Natural killer cell (primary cell): ENCODE measurements at regions of chr4 and their contacts with region 1.

Region 1: DNA sequence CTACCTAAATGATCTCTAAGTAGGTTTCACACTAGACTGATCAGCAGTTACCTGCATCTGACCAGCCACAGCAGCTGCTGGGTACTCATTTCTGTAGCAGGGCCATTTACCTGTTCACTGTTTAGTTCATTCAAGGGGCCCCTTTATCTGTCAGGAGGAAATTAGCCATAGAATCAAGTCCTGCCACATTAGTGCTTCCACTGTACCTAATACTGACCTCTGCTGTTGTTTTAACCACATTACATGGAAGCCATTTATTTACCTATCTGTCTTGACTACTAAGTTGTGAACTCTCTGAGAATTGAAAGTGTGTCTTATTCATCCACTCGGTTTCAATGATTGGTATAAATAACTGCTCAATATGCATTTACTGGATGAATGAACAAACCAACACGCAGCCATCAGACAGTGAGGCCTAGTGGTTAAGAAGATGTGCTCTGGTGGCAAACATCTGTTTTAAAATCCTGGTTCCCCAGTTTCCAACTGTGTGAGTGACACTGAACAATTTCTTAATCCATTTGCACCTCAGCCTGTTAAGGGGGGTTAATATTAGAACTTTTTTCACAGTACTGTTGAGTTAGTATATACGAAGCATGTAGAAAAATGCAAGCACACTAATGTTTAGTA is 30.0 kb upstream of the ANXA5 start:
- DNase-seq: peak in 1 of 2 donors; percentile 67
- ATAC-seq: peak; percentile 86 to 95 (median 94)
- H3K4me3 ChIP-seq: no peak overlapping the region
- H3K4me3 Mint-ChIP-seq: no peak overlapping the region
- H3K27ac ChIP-seq: no peak overlapping the region
- H3K27ac Mint-ChIP-seq: no peak overlapping the region
- H3K4me1 ChIP-seq: no peaks in the 10 kb centered on the region
- H3K4me1 Mint-ChIP-seq: no peaks in the 10 kb centered on the region
- H3K27me3 ChIP-seq: no peaks in the 10 kb centered on the region
- H3K27me3 Mint-ChIP-seq: peaks cover 11 to 24% of the 10 kb centered on the region in 2 donors
- CTCF ChIP-seq: peak; percentile 66

Region 2: GRCh38 chr4:121370729-121371325 is 355.9 kb before region 1 on chr4:
- intact Hi-C with region 1: loop called (anchors 1 kb)
- DNase-seq: peak in 1 of 2 donors; percentile 46
- ATAC-seq: no peak
- H3K4me3 ChIP-seq: no peak overlapping the region
- H3K4me3 Mint-ChIP-seq: no peak overlapping the region
- H3K27ac ChIP-seq: no peak overlapping the region
- H3K27ac Mint-ChIP-seq: no peak overlapping the region
- H3K4me1 ChIP-seq: no peaks in the 10 kb centered on the region
- H3K4me1 Mint-ChIP-seq: no peaks in the 10 kb centered on the region
- H3K27me3 ChIP-seq: no peaks in the 10 kb centered on the region
- H3K27me3 Mint-ChIP-seq: peaks cover 9 to 26% of the 10 kb centered on the region in 2 donors
- CTCF ChIP-seq: peak; percentile 41

Region 3: DNA sequence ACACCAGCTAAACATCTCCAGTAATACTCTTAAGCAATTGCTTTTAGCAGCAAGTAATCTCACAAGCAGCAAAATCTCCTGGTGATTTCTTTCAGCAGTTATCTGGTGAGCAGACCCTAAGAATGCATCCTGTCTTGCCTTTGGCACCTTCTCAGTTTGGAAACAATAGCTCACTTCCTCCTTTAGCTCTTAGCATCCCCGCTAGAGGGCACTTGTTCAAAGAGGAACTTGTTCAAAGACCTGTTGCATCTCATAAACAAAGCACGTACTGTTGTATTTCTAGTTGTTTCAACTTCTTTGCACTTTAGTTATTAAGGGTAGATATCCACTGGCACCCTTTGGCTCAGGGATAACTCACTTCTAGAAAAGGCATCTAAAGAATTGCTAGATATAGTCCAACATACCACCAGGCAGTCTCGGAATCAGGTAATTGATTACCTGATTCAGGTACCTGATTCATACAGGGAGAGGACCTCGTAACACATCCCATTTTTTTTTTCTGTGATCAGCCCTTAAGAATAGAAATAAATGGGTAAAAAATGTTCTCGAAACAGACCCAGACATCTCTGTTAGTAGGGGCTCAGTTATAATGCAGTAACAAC is 264.0 kb before region 1 on chr4:
- intact Hi-C with region 1: loop called (anchors 1 kb)
- DNase-seq: peak in 1 of 2 donors; percentile 61
- ATAC-seq: peak; percentile 55 to 62 (median 61)
- H3K4me3 ChIP-seq: no peak overlapping the region
- H3K4me3 Mint-ChIP-seq: no peak overlapping the region
- H3K27ac ChIP-seq: no peak overlapping the region
- H3K27ac Mint-ChIP-seq: no peak overlapping the region
- H3K4me1 ChIP-seq: no peaks in the 10 kb centered on the region
- H3K4me1 Mint-ChIP-seq: no peaks in the 10 kb centered on the region
- H3K27me3 ChIP-seq: no peaks in the 10 kb centered on the region
- H3K27me3 Mint-ChIP-seq: peaks cover 7 to 18% of the 10 kb centered on the region in 2 donors
- CTCF ChIP-seq: peak; percentile 47

Region 4: GRCh38 chr4:121484633-121485032 is 242.1 kb before region 1 on chr4:
- intact Hi-C with region 1: loop called (anchors 5 kb)
- DNase-seq: peak in 1 of 2 donors; percentile 43
- ATAC-seq: peak; percentile 53 to 78 (median 72)
- H3K4me3 ChIP-seq: no peak overlapping the region
- H3K4me3 Mint-ChIP-seq: no peak overlapping the region
- H3K27ac ChIP-seq: no peak overlapping the region
- H3K27ac Mint-ChIP-seq: no peak overlapping the region
- H3K4me1 ChIP-seq: no peaks in the 10 kb centered on the region
- H3K4me1 Mint-ChIP-seq: no peaks in the 10 kb centered on the region
- H3K27me3 ChIP-seq: no peaks in the 10 kb centered on the region
- H3K27me3 Mint-ChIP-seq: peaks cover 9 to 21% of the 10 kb centered on the region in 2 donors
- CTCF ChIP-seq: peak; percentile 59